GM12878 (cell line): ENCODE measurements at regions of chr4 and their contacts with region 1.

Region 1: DNA sequence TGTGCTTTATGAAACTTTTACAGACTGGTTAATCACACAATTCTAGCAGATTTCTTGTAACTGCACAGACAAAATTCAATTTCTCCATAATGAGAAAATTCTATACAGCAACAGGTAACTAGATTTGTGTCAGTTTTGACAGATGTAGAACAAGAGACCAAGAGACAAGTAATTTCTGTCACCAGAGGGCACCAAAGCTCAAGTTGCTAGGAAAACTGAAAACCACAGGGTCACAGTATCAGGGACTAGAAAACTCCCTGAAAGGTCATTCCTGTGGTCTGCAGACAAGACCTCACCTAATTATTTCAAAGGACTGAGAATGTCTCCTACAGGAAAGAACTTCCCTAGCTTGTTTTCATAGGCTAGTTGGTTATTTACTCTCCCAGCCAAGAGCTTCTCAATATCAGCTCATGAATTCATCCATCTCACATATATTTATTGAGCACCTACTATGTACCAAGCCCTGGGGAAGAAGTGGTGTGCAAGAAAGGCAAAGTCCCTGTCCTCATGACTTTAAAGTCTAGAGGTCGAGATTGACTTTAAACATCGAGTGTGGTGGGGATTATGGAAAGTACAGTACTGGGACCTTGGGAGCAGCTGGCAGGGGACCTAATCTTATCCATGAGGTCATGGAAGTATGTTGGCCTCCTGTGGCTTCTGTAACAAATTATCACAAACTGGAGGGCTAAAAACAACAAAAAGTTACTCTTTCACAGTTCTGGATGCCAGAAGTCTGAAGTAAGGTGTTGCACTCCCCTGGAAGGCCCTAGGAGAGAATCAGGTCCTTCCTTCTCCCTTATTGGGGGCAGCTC is 47.8 kb upstream of the SETD7 start:
- DNase-seq: peak; percentile 8
- ATAC-seq: peak; percentile 72
- H3K4me3 ChIP-seq: no peak overlapping the region
- H3K27ac ChIP-seq: no peak overlapping the region
- H3K4me1 ChIP-seq: no peaks in the 10 kb centered on the region
- H3K27me3 ChIP-seq: peaks cover 0 to 2% of the 10 kb centered on the region in 2 experiments; a peak in 1 of 4 replicates
- CTCF ChIP-seq: peak; percentile 46 to 61 (median 57)
- EP300 ChIP-seq: no peak
- POLR2A ChIP-seq: no peak
- RAD21 ChIP-seq: peak; percentile 75

Region 2: GRCh38 chr4:139617683-139618082 is 13.9 kb after region 1 on chr4:
- CTCF ChIA-PET with region 1: interaction called, 19 read pairs
- POLR2A ChIA-PET with region 1: no interaction called
- RAD21 ChIA-PET with region 1: no interaction called
- SMC1A ChIA-PET with region 1: no interaction called
- in situ Hi-C with region 1: no loop called
- intact Hi-C with region 1: no loop called
- DNase-seq: no peak
- ATAC-seq: peak; percentile 81
- H3K4me3 ChIP-seq: no peak overlapping the region
- H3K27ac ChIP-seq: no peak overlapping the region
- H3K4me1 ChIP-seq: no peaks in the 10 kb centered on the region
- H3K27me3 ChIP-seq: no peaks in the 10 kb centered on the region
- CTCF ChIP-seq: peak; percentile 19 to 62 (median 24); a peak in 4 of 6 replicates
- EP300 ChIP-seq: no peak
- POLR2A ChIP-seq: no peak
- RAD21 ChIP-seq: no peak

Region 3: DNA sequence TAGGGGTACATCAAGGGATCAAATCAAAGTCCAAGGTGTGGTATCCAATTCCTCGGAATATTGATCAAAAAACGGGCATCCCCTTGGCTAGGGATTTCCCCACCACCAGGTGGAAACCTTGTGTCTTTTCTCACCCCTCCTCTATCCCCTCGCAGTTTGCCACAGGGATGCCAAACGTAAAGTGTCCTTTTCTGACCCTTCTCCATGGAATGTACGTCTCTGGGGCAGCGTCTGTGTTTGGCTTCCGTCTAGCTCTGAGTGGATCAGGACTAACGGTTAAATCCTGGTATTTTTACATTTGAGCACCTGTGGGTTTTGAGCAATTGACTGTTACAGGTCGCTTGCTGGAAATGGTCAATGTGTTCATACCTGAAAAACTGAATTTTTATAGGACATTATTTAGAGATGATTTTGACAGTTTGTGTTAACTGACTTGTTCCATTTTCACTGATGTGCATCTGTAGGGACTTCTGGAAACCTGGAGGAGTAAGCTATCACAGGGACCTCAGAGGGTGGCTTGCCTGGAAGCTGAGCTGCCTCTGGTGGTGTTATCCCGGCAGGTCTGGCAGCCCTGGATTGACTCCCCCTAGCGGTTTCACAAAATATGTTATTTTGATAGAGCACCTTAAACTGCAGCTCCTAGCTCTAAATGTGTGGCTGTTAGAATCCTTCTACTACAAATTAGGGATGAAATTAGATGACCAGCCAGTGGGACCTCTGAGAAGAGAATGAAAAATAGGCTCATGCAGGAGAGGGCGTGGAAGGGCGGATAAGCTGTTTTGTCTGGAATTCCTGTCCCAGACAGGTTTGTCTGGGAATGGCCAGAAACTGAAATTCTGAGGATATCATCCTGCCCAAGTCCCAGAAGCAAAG is 53.1 kb after region 1 on chr4:
- CTCF ChIA-PET with region 1: interaction called, 57 read pairs
- POLR2A ChIA-PET with region 1: no interaction called
- RAD21 ChIA-PET with region 1: interaction called, 3 read pairs
- SMC1A ChIA-PET with region 1: interaction called, 22 read pairs
- in situ Hi-C with region 1: no loop called
- intact Hi-C with region 1: no loop called
- DNase-seq: no peak
- ATAC-seq: peak; percentile 93
- H3K4me3 ChIP-seq: no peak overlapping the region
- H3K27ac ChIP-seq: no peak overlapping the region
- H3K4me1 ChIP-seq: no peaks in the 10 kb centered on the region; the same call in 1 of the 2 replicates
- H3K27me3 ChIP-seq: 0 out of 4 replicates have a peak, but pooled peaks cover 0 to 3% of the 10 kb centered on the region in 2 experiments
- CTCF ChIP-seq: peak; percentile 69 to 84 (median 73)
- EP300 ChIP-seq: no peak
- POLR2A ChIP-seq: no peak
- RAD21 ChIP-seq: peak; percentile 17; the same call in 1 of the 2 replicates

Region 4: GRCh38 chr4:139943277-139943676 is 339.5 kb after region 1 on chr4:
- CTCF ChIA-PET with region 1: no interaction called
- POLR2A ChIA-PET with region 1: no interaction called
- RAD21 ChIA-PET with region 1: no interaction called
- SMC1A ChIA-PET with region 1: no interaction called
- in situ Hi-C with region 1: no loop called
- intact Hi-C with region 1: no loop called
- DNase-seq: no peak
- ATAC-seq: no peak
- H3K4me3 ChIP-seq: no peak overlapping the region
- H3K27ac ChIP-seq: no peak overlapping the region
- H3K4me1 ChIP-seq: peaks cover 8% of the 10 kb centered on the region; the same call in 1 of the 2 replicates
- H3K27me3 ChIP-seq: no peaks in the 10 kb centered on the region
- CTCF ChIP-seq: no peak
- EP300 ChIP-seq: no peak
- POLR2A ChIP-seq: no peak
- RAD21 ChIP-seq: no peak